ENCODE measurements at regions of chr20 and their contacts with region 1.

Region 1: DNA sequence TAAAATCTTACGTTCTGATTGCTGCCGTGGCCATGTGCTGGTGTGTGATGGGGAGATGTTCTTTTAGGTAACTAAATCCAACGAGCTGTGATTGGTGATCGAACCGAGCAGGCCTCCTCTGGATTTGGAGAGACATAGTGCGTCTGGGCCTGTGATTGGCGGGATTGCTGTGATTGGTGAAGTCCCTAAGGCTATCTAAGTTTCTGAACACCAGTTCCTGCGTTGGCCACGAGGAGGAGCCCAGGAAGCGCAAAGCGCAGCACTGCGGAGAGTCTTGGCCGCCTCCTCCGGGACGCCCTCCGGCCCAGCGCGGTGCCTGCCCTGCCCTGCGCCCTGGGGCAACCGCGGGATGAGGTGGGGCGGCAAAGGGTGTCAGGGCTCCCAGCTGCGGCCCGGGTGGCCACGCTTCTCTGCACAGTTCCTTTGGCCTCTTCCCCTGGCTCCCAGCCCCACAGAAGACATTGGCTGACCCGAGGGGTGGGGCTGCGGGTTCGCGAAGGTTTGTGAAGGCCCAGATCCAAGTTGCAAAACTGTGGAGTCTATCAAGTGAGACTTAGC is 33.0 kb downstream of the HNF4A start:
- DNase-seq: peak; percentile 47
- H3K4me3 ChIP-seq: no peak overlapping the region
- CTCF ChIP-seq: peak; percentile 83

Region 2: DNA sequence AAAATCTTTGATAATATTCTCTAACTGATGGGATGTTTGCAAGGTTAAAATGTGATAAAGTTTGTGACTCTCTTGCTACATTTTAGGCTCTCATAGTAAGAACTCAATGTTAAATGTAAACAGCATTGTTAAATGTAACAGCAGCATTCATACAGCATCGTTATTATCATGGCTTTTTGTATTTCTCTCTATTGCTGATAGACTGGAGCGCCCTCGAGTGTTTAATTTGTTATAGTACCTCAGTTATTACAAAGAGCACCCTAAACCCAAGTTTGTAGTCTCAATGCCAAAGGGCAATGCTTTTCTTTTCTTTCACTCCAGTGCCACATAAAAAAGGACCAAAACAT is 72.2 kb after region 1 on chr20:
- in situ Hi-C with region 1: loop called (anchors 10 kb)
- DNase-seq: peak; percentile 29
- H3K4me3 ChIP-seq: no peak overlapping the region
- CTCF ChIP-seq: peak; percentile 44